Motor neuron (in vitro differentiated cells): ENCODE measurements at regions of chr21 and their contacts with region 1.

Region 1: GRCh38 chr21:34888569-34889319 is 160.4 kb downstream of the RUNX1 start:
- ATAC-seq: peak; percentile 39 to 81 (median 73)
- H3K4me3 ChIP-seq: peak overlapping the region; percentile 45 to 66 (median 54)
- H3K27ac ChIP-seq: no peak overlapping the region
- H3K4me1 ChIP-seq: peaks cover 7 to 8% of the 10 kb centered on the region in 2 donors

Region 2: GRCh38 chr21:34630536-34631143 is 258.1 kb before region 1 on chr21:
- in situ Hi-C with region 1: no loop called
- ATAC-seq: peak; percentile 45 to 76 (median 58)
- H3K4me3 ChIP-seq: no peak overlapping the region
- H3K27ac ChIP-seq: no peak overlapping the region
- H3K4me1 ChIP-seq: no peaks in the 10 kb centered on the region

Region 3: GRCh38 chr21:35256467-35256988 is 367.8 kb after region 1 on chr21:
- in situ Hi-C with region 1: loop called in 1 of 9 experiments (anchors 25 kb)
- ATAC-seq: peak; percentile 70 to 97 (median 80)
- H3K4me3 ChIP-seq: no peak overlapping the region
- H3K27ac ChIP-seq: no peak overlapping the region
- H3K4me1 ChIP-seq: peaks cover 6 to 15% of the 10 kb centered on the region in 2 donors

Region 4: DNA sequence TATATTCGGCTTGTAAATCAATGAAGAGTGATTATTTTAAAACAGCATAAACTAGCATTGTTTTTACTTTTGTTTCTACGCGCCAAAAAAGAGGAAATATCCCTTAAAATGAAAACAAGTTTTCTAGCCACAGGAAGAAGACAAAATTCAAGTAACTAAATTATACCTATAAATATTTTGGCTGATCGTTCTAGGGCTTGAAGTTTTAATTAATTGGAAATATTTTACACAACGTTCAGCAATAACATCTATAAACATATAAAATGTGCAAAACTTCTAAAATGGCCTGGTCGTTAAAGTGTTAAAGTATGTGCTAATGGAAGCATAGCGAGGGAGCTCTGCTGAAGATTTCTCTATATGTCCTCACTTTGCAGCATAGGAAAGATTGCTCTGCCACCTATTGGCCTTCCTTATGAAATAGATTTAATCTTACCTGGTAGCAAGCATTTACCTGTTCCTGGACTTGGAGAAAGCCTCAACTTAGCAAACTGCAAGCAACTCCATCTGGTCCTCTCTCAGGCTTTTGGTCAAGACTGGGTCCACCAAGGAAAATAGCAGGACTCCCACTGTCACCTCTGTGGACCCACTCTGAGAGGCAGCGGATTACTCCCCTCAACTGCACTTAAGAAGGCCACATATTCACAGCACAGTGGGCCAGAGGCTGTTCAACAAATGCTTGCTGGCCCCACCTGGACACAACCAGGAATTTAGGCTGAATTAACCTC is 511.7 kb after region 1 on chr21:
- in situ Hi-C with region 1: loop called in 4 of 9 experiments (anchors 25 kb)
- ATAC-seq: peak in 6 of 8 experiments; percentile 39 to 85 (median 57)
- H3K4me3 ChIP-seq: no peak overlapping the region
- H3K27ac ChIP-seq: no peak overlapping the region
- H3K4me1 ChIP-seq: no peaks in the 10 kb centered on the region

Region 5: DNA sequence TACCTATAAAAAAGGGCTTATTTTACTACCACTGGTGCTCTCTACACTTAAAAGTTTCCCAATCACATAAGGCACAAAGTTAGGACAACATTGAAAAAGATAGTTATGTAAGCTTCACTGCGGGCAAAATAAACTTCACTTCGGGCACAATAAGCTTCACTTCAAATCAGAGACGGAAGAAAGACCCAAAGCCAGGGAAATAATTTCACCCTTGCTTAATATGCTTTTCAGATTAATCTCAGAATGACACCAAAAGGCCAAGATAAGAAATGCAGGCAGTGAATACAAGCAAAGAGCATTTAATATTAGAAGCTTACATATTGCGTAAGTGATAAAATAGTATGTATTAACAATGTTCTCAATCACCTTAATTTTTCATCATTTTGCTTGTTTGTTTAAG is 727.3 kb after region 1 on chr21:
- in situ Hi-C with region 1: loop called in 1 of 9 experiments (anchors 25 kb)
- ATAC-seq: peak in 1 of 8 experiments; percentile 9
- H3K4me3 ChIP-seq: no peak overlapping the region
- H3K27ac ChIP-seq: no peak overlapping the region
- H3K4me1 ChIP-seq: no peaks in the 10 kb centered on the region

Region 6: DNA sequence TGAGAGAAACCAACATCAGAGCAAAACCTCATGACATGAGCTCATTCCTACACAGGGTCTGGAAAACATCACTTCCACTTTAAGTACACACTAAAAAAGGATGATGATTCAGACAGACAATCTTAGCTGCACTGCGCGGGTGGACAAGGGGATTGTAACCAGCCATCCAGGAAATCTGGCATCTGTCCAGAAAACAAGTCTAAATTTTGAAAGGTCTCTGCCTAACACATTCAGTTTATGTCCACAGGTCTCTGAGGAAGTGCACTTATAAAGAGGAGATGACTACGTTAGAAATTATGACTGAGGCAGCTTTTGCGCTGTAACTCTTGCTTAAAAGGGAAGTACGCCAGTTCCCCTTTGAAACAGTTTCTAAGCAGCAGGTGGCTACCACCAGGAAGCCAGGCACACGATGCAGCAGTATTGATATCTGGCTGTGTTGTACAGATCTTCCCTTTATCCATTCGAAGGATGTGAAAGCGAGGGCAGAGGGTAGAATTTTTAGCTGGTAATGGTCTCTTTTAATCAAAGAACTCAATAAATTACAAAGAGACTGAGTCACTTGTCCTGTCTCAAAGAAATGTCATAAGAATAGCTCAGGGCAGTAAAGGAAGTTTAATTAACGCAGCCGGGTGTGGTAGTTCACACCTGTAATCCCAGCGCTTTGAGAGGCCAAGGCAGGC is 1043.6 kb after region 1 on chr21:
- in situ Hi-C with region 1: loop called in 1 of 9 experiments (anchors 25 kb)
- ATAC-seq: peak in 7 of 8 experiments; percentile 28 to 98 (median 78)
- H3K4me3 ChIP-seq: no peak overlapping the region
- H3K27ac ChIP-seq: no peak overlapping the region
- H3K4me1 ChIP-seq: peaks cover 0 to 6% of the 10 kb centered on the region in 2 donors